Ascending aorta (tissue), 2 donors: ENCODE measurements at regions of chr5 and their contacts with region 1.

Region 1: DNA sequence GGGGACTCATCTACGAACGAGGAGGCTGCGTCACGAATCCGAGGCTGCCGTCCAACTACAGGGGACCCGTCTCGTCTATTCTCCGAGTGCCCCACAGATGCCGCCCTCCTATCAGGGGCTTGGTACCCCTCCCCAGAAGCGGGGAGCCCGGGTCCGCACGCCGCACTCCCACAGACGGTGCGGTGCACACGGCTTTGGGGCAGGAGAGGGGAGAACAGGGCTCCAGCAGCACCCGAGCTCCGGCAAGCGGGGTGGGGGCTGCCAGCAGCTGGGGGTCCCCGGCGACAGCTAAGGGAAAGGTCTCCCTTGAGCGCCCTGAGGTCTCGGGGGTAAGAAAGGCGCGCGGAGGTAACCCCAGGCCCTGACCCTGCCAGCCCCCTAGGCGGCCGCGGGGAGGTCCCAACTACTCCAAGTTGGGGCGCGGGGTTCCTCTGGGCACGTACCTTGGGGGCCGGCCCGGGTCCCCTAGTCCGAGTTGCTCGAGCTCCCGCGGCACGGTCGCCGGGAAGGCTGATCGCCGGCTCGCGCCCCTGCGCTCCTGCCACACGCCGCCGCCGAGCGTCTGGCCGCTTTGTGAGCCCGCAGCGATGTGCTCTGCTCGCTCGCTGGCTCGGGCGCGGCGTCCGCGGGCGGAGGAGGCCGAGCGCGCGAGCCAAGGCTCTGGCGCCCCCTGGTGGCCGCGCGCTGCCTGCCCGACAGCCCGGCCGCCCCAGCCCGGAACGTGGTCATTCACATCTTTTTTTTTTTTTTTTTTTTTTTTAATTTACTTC is at the start of gene SPOCK1:
- DNase-seq: peak in 1 of 2 donors; percentile 83
- H3K4me3 ChIP-seq: peak within 1 kb of the TSS; percentile 68 to 90
- H3K27ac ChIP-seq: no peak within 1 kb of the TSS
- H3K4me1 ChIP-seq: peaks cover 4 to 6% of the 10 kb centered on the region in 2 donors
- H3K27me3 ChIP-seq: no peaks in the 10 kb centered on the region
- CTCF ChIP-seq: peak in 2 of 3 experiments; percentile 35 to 84
- total RNA-seq, gene SPOCK1: 81.2 TPM

Region 2: GRCh38 chr5:137075163-137075970 is 423.6 kb before region 1 on chr5:
- intact Hi-C with region 1: loop called (anchors 2 kb)
- DNase-seq: no peak
- H3K4me3 ChIP-seq: no peak overlapping the region
- H3K27ac ChIP-seq: no peak overlapping the region
- H3K4me1 ChIP-seq: peaks cover 3 to 13% of the 10 kb centered on the region in 2 donors
- H3K27me3 ChIP-seq: no peaks in the 10 kb centered on the region
- CTCF ChIP-seq: no peak

Region 3: GRCh38 chr5:137201876-137202275 is 297.0 kb before region 1 on chr5:
- intact Hi-C with region 1: loop called (anchors 2 kb)
- DNase-seq: peak in 1 of 2 donors; percentile 85
- H3K4me3 ChIP-seq: no peak overlapping the region
- H3K27ac ChIP-seq: no peak overlapping the region
- H3K4me1 ChIP-seq: no peaks in the 10 kb centered on the region
- H3K27me3 ChIP-seq: no peaks in the 10 kb centered on the region
- CTCF ChIP-seq: peak; percentile 30 to 44 (median 35)

Region 4: GRCh38 chr5:137344723-137345322 is 154.1 kb before region 1 on chr5:
- intact Hi-C with region 1: loop called (anchors 5 kb)
- DNase-seq: no peak
- H3K4me3 ChIP-seq: no peak overlapping the region
- H3K27ac ChIP-seq: no peak overlapping the region
- H3K4me1 ChIP-seq: no peaks in the 10 kb centered on the region
- H3K27me3 ChIP-seq: no peaks in the 10 kb centered on the region
- CTCF ChIP-seq: peak; percentile 8 to 58 (median 52)

Region 5: GRCh38 chr5:138065102-138065501 is 566.2 kb after region 1 on chr5:
- intact Hi-C with region 1: no loop called
- DNase-seq: no peak
- H3K4me3 ChIP-seq: no peak overlapping the region
- H3K27ac ChIP-seq: no peak overlapping the region
- H3K4me1 ChIP-seq: peaks cover 0 to 3% of the 10 kb centered on the region in 2 donors
- H3K27me3 ChIP-seq: no peaks in the 10 kb centered on the region
- CTCF ChIP-seq: no peak